ENCODE measurements at regions of chr2 and their contacts with region 1.

Region 1: GRCh38 chr2:85001595-85001994 is 30.6 kb downstream of the KCMF1 start:
- DNase-seq: peak in 1 of 3 donors; percentile 45
- H3K4me3 ChIP-seq: no peak overlapping the region
- H3K27ac ChIP-seq: no peak overlapping the region
- H3K4me1 ChIP-seq: peaks cover 2 to 9% (median 5%) of the 10 kb centered on the region in 4 experiments
- H3K27me3 ChIP-seq: no peaks in the 10 kb centered on the region

Region 2: DNA sequence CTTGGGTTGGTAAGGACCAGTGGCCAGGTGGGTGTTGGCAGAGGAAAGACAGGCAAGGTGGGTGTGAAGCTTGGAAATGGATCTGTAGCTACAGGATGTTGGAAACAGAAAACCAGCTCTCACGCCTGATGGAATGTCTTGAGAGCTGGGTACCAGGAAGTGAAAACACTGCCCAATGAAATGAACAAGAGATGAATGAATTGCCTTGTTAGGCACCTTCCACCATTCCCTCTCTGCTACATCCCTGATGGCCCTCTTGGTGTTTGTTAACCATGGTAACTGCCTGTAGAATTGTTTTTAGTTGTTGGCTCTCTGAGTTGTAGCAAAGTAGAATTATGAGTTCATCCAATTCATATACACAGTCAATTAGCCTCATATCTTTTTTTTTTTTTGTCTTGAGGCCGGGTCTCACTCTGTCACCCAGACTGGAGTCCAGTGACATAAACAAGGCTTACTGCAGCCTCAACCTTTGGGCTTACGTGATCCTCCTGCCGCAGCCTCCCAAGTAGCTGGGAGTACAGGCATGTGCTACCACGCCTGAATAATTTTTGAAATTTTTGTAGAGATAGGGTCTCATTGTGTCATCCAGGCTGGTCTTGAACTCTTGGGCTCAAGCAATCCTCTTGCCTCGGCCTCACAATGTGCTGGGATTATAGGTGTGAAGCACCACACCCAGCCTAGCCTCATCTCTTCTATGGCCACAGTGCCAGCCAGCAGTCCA is 21.2 kb before region 1 on chr2:
- CTCF ChIA-PET with region 1: interaction called, 11 read pairs
- POLR2A ChIA-PET with region 1: no interaction called
- DNase-seq: peak in 2 of 3 donors; percentile 24 to 25
- H3K4me3 ChIP-seq: no peak overlapping the region
- H3K27ac ChIP-seq: no peak overlapping the region
- H3K4me1 ChIP-seq: peaks cover 0 to 3% (median 0%) of the 10 kb centered on the region in 4 experiments
- H3K27me3 ChIP-seq: no peaks in the 10 kb centered on the region

Region 3: DNA sequence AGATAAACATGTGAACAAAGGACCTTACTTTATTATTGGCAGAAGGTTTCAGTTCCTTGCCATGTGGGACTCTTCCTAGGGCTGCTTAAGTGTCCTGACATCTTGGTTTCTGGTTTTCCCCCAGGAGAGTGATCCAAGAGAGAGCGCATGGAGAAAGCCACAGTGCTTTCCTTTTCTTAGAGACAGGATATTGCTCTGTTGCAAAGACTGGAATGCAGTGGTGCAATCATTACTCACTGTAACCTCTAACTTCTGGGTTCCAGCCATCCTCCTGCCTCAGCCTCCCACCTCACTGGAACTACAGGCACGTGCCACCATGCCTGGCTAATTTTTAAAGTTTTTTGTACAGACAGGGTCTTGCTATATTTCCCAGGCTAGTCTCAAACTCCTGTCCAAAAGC is 93.5 kb after region 1 on chr2:
- CTCF ChIA-PET with region 1: no interaction called
- POLR2A ChIA-PET with region 1: no interaction called
- DNase-seq: no peak
- H3K4me3 ChIP-seq: no peak overlapping the region
- H3K27ac ChIP-seq: no peak overlapping the region
- H3K4me1 ChIP-seq: no peaks in the 10 kb centered on the region
- H3K27me3 ChIP-seq: no peaks in the 10 kb centered on the region

Measured in common myeloid progenitor, CD34-positive (primary cell).